ENCODE measurements at regions of chr14 and their contacts with region 1.

Region 1: GRCh38 chr14:52068615-52069303 is at the start of gene NID2:
- DNase-seq: peak; percentile 89

Region 2: GRCh38 chr14:52043690-52044089 is 25.1 kb before region 1 on chr14:
- CTCF ChIA-PET with region 1: interaction called, 12 read pairs
- POLR2A ChIA-PET with region 1: interaction called, 11 read pairs
- DNase-seq: peak; percentile 78

Region 3: GRCh38 chr14:52080817-52081755 is 12.3 kb after region 1 on chr14:
- CTCF ChIA-PET with region 1: interaction called, 12 read pairs
- POLR2A ChIA-PET with region 1: interaction called, 14 read pairs
- DNase-seq: no peak

Measured in HEK293T (cell line).